ENCODE measurements at regions of chr1 and their contacts with region 1.

Region 1: DNA sequence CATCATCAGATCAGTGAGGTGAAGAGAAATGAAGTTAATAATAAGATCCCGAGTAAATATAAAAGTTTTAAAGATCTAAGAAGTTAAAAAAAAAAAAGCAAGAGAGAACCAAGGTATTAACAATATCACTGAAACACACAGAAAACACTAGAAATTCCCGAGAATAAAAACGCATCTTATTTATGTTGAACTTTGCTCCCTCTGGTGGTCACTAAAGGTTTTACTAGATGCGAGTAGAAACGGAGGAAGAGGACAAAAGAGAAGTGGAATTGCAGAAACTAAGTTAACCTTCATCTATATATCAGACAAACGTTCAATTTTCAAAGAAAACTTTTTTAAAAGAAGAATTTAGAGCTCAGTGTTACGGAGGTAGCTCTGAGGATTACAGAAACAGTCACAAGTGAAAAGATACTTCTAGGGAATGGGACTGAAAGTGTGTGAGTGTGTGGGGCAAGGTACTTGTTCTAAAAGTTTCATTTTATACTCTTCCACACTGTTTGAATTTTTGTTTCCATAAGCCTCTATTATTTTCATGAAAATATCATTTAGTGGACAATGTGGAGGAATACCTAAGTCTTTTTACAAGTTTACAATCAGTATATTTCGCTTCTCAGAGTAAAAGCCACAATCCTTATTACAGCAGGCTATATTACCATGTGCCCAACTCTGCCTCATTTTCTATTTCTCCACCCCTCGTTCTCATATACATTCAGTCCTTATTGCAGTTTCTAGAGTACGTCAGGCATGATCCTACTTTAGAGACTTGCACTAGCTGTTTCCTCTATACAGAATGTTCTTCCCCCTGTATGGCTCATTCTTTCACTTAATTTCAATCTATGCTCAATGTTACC is 19.7 kb downstream of the ACBD6 start:
- DNase-seq: no peak
- ATAC-seq: peak in 2 of 4 donors; percentile 47 to 67
- H3K4me3 ChIP-seq: no peak overlapping the region
- H3K27ac ChIP-seq: no peak overlapping the region
- H3K4me1 ChIP-seq: no peaks in the 10 kb centered on the region
- H3K27me3 ChIP-seq: no peaks in the 10 kb centered on the region
- CTCF ChIP-seq: peak; percentile 76

Region 2: DNA sequence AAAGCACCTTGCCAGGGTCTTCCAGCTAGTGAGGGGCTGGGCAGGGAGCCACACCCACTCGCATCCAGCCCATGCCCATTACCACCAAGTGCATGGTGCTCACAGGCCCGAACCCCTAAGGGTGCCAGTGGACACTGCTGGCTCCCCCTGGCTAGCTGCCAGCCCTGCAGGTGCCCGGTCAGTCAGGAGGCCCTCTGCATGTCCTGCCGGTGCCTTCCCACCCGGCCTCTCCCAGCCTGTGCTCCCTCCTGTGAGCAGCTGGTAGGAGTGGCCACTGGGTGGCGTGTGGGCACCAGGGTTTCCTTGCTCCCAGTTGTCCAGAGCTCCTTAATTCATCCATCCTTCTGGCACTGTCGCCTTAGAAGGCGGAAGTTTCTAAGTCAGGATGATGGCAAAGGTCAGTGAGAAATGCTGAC is 294.6 kb before region 1 on chr1:
- intact Hi-C with region 1: loop called in 1 of 2 experiments (anchors 5 kb)
- DNase-seq: peak in 1 of 2 donors; percentile 69
- ATAC-seq: peak; percentile 16 to 65 (median 42)
- H3K4me3 ChIP-seq: no peak overlapping the region
- H3K27ac ChIP-seq: no peak overlapping the region
- H3K4me1 ChIP-seq: no peaks in the 10 kb centered on the region
- H3K27me3 ChIP-seq: no peaks in the 10 kb centered on the region
- CTCF ChIP-seq: peak; percentile 55

Region 3: GRCh38 chr1:180252638-180253536 is 229.8 kb before region 1 on chr1:
- intact Hi-C with region 1: loop called (anchors 2 kb)
- DNase-seq: peak; percentile 66 to 83
- ATAC-seq: peak; percentile 65 to 85 (median 75)
- H3K4me3 ChIP-seq: no peak overlapping the region
- H3K27ac ChIP-seq: no peak overlapping the region
- H3K4me1 ChIP-seq: no peaks in the 10 kb centered on the region
- H3K27me3 ChIP-seq: peaks cover 0 to 39% (median 11%) of the 10 kb centered on the region in 3 donors
- CTCF ChIP-seq: peak; percentile 80

Region 4: GRCh38 chr1:180360333-180361075 is 122.1 kb before region 1 on chr1:
- intact Hi-C with region 1: loop called in 1 of 2 experiments (anchors 5 kb)
- DNase-seq: no peak
- ATAC-seq: no peak
- H3K4me3 ChIP-seq: no peak overlapping the region
- H3K27ac ChIP-seq: no peak overlapping the region
- H3K4me1 ChIP-seq: peaks cover 14% of the 10 kb centered on the region
- H3K27me3 ChIP-seq: no peaks in the 10 kb centered on the region
- CTCF ChIP-seq: no peak